B cell (primary cell): ENCODE measurements at regions of chr5 and their contacts with region 1.

Region 1: GRCh38 chr5:75236322-75237316 is at the start of gene ANKRD31:
- DNase-seq: peak; percentile 93
- ATAC-seq: peak; percentile 99
- H3K4me3 ChIP-seq: peak within 1 kb of the TSS; percentile 57 to 84 (median 73)
- H3K4me3 Mint-ChIP-seq: peak within 1 kb of the TSS; percentile 99
- H3K27ac ChIP-seq: peak within 1 kb of the TSS; percentile 45 to 63
- H3K27ac Mint-ChIP-seq: peak within 1 kb of the TSS; percentile 92
- H3K4me1 ChIP-seq: peaks cover 4 to 8% of the 10 kb centered on the region in 2 donors
- H3K4me1 Mint-ChIP-seq: peaks cover 11% of the 10 kb centered on the region
- H3K27me3 ChIP-seq: no peaks in the 10 kb centered on the region
- H3K27me3 Mint-ChIP-seq: peaks cover 7% of the 10 kb centered on the region
- CTCF ChIP-seq: peak; percentile 87
- total RNA-seq, gene ANKRD31: 0.10 TPM in 2 replicates

Region 2: DNA sequence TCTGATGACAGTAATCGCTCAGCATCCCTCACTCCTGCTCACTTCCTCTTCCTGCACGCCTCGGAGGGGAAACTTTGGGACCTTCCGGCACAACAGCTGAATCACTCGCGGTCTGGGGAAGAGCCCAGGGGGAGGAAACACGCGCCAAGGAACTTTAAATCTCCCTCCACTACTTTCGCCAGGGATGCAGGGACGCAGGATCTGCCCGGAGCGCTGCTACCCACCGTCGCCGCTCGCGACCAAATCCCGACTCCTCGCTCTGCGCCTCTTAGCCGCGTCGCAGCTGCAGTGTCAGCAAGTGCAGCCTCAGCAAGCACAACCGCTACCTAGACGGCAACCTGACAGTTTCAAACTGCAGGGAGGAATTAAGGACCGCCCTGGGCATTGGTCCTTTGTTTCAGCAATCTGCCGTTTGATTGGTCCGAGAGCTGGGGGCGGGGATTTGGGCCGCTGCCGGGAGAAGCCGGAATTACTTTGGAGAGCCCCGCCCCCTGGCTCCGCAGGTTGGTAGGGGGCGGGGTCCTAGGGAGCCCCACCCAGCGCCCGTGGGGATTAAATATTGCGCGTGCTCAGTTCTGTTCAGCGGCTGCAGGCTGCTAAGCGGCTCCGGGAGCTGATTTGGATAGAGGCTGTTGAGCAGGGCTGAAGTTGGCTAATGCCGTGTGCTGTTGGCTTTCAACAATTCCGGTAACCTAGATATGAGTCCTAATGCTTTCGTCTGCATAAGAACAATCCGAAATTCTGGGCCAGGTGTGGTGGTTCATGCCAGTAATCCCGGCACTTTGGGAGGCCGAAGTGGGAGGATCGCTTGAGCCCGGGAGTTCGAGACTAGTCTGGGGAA is 480.7 kb after region 1 on chr5 and contains the start of gene POC5:
- CTCF ChIA-PET with region 1: interaction called, 5 read pairs
- POLR2A ChIA-PET with region 1: no interaction called
- intact Hi-C with region 1: loop called (anchors 1 kb)
- DNase-seq: peak; percentile 98
- ATAC-seq: peak; percentile 95
- H3K4me3 ChIP-seq: peak within 1 kb of the TSS; percentile 80 to 99 (median 89)
- H3K4me3 Mint-ChIP-seq: peak within 1 kb of the TSS; percentile 100
- H3K27ac ChIP-seq: peak within 1 kb of the TSS; percentile 80 to 85
- H3K27ac Mint-ChIP-seq: peak within 1 kb of the TSS; percentile 99
- H3K4me1 ChIP-seq: peaks cover 12 to 18% of the 10 kb centered on the region in 2 donors
- H3K4me1 Mint-ChIP-seq: peaks cover 37% of the 10 kb centered on the region
- H3K27me3 ChIP-seq: peaks cover 0 to 4% (median 0%) of the 10 kb centered on the region in 4 experiments
- H3K27me3 Mint-ChIP-seq: peaks cover 6% of the 10 kb centered on the region
- CTCF ChIP-seq: no peak
- total RNA-seq, gene POC5: 22.7 and 25.5 TPM in 2 replicates

Region 3: GRCh38 chr5:76175051-76175666 is 938.5 kb after region 1 on chr5:
- CTCF ChIA-PET with region 1: interaction called, 10 read pairs
- POLR2A ChIA-PET with region 1: no interaction called
- intact Hi-C with region 1: loop called (anchors 2 kb)
- DNase-seq: peak; percentile 69
- ATAC-seq: peak; percentile 36
- H3K4me3 ChIP-seq: no peak overlapping the region
- H3K4me3 Mint-ChIP-seq: no peak overlapping the region
- H3K27ac ChIP-seq: no peak overlapping the region
- H3K27ac Mint-ChIP-seq: no peak overlapping the region
- H3K4me1 ChIP-seq: peaks cover 14 to 18% of the 10 kb centered on the region in 2 donors
- H3K4me1 Mint-ChIP-seq: peaks cover 15% of the 10 kb centered on the region
- H3K27me3 ChIP-seq: no peaks in the 10 kb centered on the region
- H3K27me3 Mint-ChIP-seq: no peaks in the 10 kb centered on the region
- CTCF ChIP-seq: peak; percentile 94